Heart left ventricle (tissue), 16 donors: ENCODE measurements at regions of chr3 and their contacts with region 1.

Region 1: DNA sequence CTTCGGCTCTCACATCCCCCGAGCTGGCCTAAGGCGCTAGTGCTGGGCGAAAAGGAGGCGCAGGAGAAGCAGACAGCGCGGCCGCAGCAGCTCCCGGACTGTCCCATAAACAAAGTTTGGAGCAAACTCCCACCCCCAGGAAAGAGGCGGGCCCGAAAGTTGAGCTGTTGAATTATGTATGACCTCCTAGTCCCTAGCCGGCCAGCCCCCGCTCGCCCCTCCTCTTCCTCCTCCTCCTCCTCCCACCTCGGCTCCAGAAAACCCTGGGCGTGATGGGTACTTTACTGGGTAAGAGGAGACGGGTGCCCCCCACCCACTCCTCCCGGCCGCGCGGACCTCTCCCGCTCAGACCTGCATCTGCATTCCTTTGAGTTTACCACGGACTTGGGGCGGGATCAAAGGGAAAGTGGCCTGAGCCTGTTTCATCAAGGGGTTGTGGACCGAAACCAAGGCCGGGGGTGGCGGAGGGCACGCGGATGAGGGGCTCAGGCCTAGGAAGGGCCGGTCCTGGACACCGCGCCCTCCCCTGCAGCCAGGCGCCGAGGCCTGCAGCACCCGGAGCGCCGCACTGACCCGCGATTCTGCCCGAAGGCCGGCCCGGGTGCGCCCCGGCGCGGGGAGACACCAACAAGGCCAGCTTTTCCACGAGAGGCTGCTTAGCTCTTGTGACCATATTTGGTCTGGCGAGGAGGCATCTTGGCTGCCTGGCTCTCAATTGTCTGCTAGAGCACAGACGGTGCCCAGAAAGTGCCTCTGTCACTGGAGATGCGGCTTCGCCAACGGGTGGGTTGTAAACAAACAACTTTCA is at the start of gene WWTR1:
- DNase-seq: peak; percentile 93 to 97 (median 96)
- ATAC-seq: peak; percentile 87 to 95 (median 90)
- H3K4me3 ChIP-seq: peak within 1 kb of the TSS; percentile 49 to 94 (median 78)
- H3K27ac ChIP-seq: peak within 1 kb of the TSS; percentile 89 to 100 (median 98)
- H3K4me1 ChIP-seq: peaks cover 0 to 46% (median 30%) of the 10 kb centered on the region in 12 donors
- H3K27me3 ChIP-seq: peaks cover 0 to 36% (median 0%) of the 10 kb centered on the region in 9 donors
- CTCF ChIP-seq: peak in 9 of 12 donors; percentile 8 to 60 (median 39)
- POLR2A ChIP-seq: peak; percentile 56 to 99
- total RNA-seq, gene WWTR1: 32.5 to 71.7 (median 41.2) TPM

Region 2: GRCh38 chr3:149527531-149528339 is 130.4 kb before region 1 on chr3:
- intact Hi-C with region 1: loop called in 9 of 10 experiments (anchors 5 to 10 kb)
- DNase-seq: peak in 3 of 5 donors; percentile 28 to 39 (median 34)
- ATAC-seq: peak; percentile 74 to 79 (median 75)
- H3K4me3 ChIP-seq: no peak overlapping the region
- H3K27ac ChIP-seq: peak overlapping the region in 11 of 12 donors; percentile 5 to 64 (median 44)
- H3K4me1 ChIP-seq: peaks cover 0 to 43% (median 24%) of the 10 kb centered on the region in 12 donors
- H3K27me3 ChIP-seq: no peaks in the 10 kb centered on the region
- CTCF ChIP-seq: peak in 10 of 12 donors; percentile 7 to 61 (median 45)
- POLR2A ChIP-seq: no peak

Region 3: GRCh38 chr3:149547938-149548668 is 110.0 kb before region 1 on chr3:
- intact Hi-C with region 1: no loop called
- DNase-seq: peak in 4 of 5 donors; percentile 32 to 71 (median 40)
- ATAC-seq: peak; percentile 66 to 91 (median 77)
- H3K4me3 ChIP-seq: no peak overlapping the region
- H3K27ac ChIP-seq: peak overlapping the region; percentile 25 to 83 (median 64)
- H3K4me1 ChIP-seq: peaks cover 0 to 42% (median 12%) of the 10 kb centered on the region in 12 donors
- H3K27me3 ChIP-seq: no peaks in the 10 kb centered on the region
- CTCF ChIP-seq: no peak
- POLR2A ChIP-seq: no peak

Region 4: GRCh38 chr3:149566292-149566975 is 91.7 kb before region 1 on chr3:
- intact Hi-C with region 1: loop called in 4 of 10 experiments (anchors 5 to 10 kb)
- DNase-seq: no peak
- ATAC-seq: peak in 1 of 4 donors; percentile 21
- H3K4me3 ChIP-seq: no peak overlapping the region
- H3K27ac ChIP-seq: peak overlapping the region in 5 of 12 donors; percentile 9 to 33 (median 26)
- H3K4me1 ChIP-seq: peaks cover 0 to 69% (median 24%) of the 10 kb centered on the region in 12 donors
- H3K27me3 ChIP-seq: no peaks in the 10 kb centered on the region
- CTCF ChIP-seq: no peak
- POLR2A ChIP-seq: no peak

Region 5: DNA sequence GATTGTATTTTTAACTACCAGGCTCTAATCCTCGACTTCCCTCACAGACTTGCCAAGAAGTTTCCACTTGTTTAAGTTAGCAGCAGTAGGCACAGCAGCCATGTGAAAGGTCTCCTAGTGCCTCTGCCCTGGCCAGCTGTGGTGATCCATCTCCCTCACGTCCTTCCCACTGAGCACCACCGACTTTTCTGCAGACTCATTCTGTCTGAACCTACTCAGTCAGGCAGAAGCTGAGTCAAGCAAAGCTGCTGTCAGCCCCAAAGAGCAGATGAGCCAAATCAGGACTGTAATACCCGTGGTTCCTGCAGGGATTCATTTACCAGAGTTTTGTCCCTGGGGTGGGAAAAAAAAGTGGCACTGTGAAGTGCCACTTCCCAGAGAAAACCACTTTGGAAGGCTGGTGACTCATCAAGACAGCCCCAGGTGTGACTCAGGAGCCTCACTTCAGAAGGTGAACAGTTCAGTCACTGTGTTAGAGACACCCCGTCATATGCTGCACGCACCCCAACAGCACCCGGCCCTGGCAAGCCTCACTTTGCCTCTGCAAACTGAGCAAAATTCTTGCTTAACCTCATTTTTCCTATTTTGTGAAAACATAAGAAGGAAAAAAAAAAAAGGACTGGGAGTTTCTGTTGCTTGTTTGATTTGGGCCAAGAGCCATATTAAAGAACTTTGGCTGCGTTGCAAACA is 76.3 kb before region 1 on chr3:
- intact Hi-C with region 1: loop called in 6 of 10 experiments (anchors 5 to 10 kb)
- DNase-seq: peak in 3 of 5 donors; percentile 38 to 64 (median 43)
- ATAC-seq: peak in 3 of 4 donors; percentile 63 to 81 (median 81)
- H3K4me3 ChIP-seq: no peak overlapping the region
- H3K27ac ChIP-seq: peak overlapping the region in 8 of 12 donors; percentile 1 to 91 (median 23)
- H3K4me1 ChIP-seq: peaks cover 8 to 90% (median 70%) of the 10 kb centered on the region in 12 donors
- H3K27me3 ChIP-seq: no peaks in the 10 kb centered on the region
- CTCF ChIP-seq: no peak
- POLR2A ChIP-seq: no peak

Region 6: GRCh38 chr3:149621218-149622005 is 36.7 kb before region 1 on chr3:
- intact Hi-C with region 1: loop called in 4 of 10 experiments (anchors 2 to 5 kb)
- DNase-seq: no peak
- ATAC-seq: peak in 1 of 4 donors; percentile 21
- H3K4me3 ChIP-seq: no peak overlapping the region
- H3K27ac ChIP-seq: peak overlapping the region in 8 of 12 donors; percentile 20 to 73 (median 50)
- H3K4me1 ChIP-seq: peaks cover 9 to 88% (median 63%) of the 10 kb centered on the region in 12 donors
- H3K27me3 ChIP-seq: peaks cover 0 to 11% (median 0%) of the 10 kb centered on the region in 9 donors
- CTCF ChIP-seq: no peak
- POLR2A ChIP-seq: no peak

Region 7: GRCh38 chr3:149717391-149718056 is 59.4 kb after region 1 on chr3:
- intact Hi-C with region 1: loop called in 7 of 10 experiments (anchors 2 to 10 kb)
- DNase-seq: peak in 3 of 5 donors; percentile 38 to 46 (median 42)
- ATAC-seq: peak in 3 of 4 donors; percentile 57 to 65 (median 59)
- H3K4me3 ChIP-seq: peak overlapping the region in 6 of 12 donors; percentile 0 to 25 (median 14)
- H3K27ac ChIP-seq: peak overlapping the region in 1 of 12 donors; percentile 44
- H3K4me1 ChIP-seq: peaks cover 0 to 5% (median 0%) of the 10 kb centered on the region in 12 donors
- H3K27me3 ChIP-seq: no peaks in the 10 kb centered on the region
- CTCF ChIP-seq: peak; percentile 61 to 83 (median 76)
- POLR2A ChIP-seq: no peak